Posterior cingulate gyrus (tissue), 11 donors: ENCODE measurements at regions of chr15 and their contacts with region 1.

Region 1: GRCh38 chr15:40160689-40161688 is at the start of gene BUB1B:
- DNase-seq: peak; percentile 79 to 98 (median 92)

Region 2: GRCh38 chr15:40038638-40039543 is 122.1 kb before region 1 on chr15 and contains the start of gene SRP14:
- intact Hi-C with region 1: loop called (anchors 5 kb)
- DNase-seq: peak; percentile 89 to 99 (median 96)